Heart left ventricle (tissue), 16 donors: ENCODE measurements at regions of chr15 and their contacts with region 1.

Region 1: DNA sequence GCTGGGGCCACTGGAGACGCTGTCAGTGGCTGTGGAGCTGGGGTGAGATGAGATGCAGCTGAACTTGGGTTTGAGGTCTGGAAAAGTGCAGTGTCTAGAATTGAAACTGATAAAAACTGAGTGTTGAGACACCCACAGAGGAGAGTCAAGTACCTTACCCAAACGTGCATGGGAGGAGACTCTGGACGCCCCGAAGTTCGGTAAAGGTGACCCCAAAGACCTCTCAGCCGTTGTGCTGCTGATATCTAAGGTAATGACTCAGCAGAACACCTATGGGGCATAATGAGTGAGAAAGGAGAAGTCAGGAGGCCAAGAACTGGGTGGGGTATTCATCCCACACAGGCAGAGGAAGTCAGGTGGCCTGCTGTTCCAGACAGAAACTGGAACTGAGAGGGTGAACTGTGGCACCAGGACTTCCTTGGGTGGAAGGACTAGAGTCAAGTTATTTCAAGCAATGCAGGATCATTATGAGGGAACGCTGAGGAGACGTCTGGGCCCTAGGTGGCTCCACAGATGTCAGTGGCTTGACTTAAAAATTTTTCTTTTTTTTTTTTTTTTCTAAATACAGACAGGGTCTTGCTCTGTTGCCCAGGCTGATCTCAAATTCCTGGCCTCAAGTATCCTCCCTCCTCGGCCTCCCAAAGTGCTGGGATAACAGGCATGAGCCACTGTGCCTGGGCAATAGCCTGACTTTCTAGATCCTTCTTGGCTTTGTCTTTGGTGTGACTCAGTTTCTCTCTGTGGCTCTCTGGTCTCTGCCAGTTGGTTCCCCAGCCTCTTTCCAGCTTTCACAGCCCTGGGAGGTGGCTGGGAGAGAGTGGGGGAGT is 67.6 kb upstream of the GCNT3 start:
- DNase-seq: no peak
- ATAC-seq: no peak
- H3K4me3 ChIP-seq: no peak overlapping the region
- H3K27ac ChIP-seq: no peak overlapping the region
- H3K4me1 ChIP-seq: no peaks in the 10 kb centered on the region
- H3K27me3 ChIP-seq: peaks cover 0 to 14% (median 0%) of the 10 kb centered on the region in 9 donors
- CTCF ChIP-seq: no peak
- POLR2A ChIP-seq: no peak

Region 2: DNA sequence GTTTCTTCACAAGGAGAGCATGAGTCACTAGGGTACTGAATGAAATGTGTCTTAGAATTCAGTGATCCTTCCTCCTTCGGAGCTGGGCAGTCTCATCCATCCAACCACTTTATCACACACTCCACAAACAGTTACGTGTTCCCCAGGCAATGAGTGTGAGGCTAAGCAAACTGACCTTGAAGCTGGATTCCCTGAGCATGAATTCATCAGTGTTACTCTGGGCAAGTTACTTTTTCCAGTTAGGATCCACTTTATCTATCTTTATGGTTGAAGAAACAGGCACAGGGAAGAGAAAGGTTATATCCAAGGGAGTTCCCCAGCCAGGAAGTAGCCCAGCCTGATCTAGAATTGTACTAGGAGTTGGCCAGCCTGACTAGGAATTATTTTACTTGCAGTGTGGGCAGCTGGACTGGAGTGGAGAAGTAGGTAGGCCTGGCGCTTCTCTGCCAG is 50.6 kb after region 1 on chr15:
- intact Hi-C with region 1: no loop called
- DNase-seq: no peak
- ATAC-seq: peak in 3 of 4 donors; percentile 79 to 93 (median 89)
- H3K4me3 ChIP-seq: no peak overlapping the region
- H3K27ac ChIP-seq: peak overlapping the region in 6 of 12 donors; percentile 19 to 41 (median 34)
- H3K4me1 ChIP-seq: peaks cover 0 to 8% (median 0%) of the 10 kb centered on the region in 12 donors
- H3K27me3 ChIP-seq: no peaks in the 10 kb centered on the region
- CTCF ChIP-seq: no peak
- POLR2A ChIP-seq: no peak

Region 3: GRCh38 chr15:59622289-59622688 is 78.4 kb after region 1 on chr15:
- intact Hi-C with region 1: loop called in 2 of 10 experiments (anchors 10 kb)
- DNase-seq: no peak
- ATAC-seq: peak in 1 of 4 donors; percentile 31
- H3K4me3 ChIP-seq: no peak overlapping the region
- H3K27ac ChIP-seq: no peak overlapping the region
- H3K4me1 ChIP-seq: no peaks in the 10 kb centered on the region
- H3K27me3 ChIP-seq: peaks cover 0 to 29% (median 3%) of the 10 kb centered on the region in 9 donors
- CTCF ChIP-seq: peak in 1 of 12 donors; percentile 35
- POLR2A ChIP-seq: no peak